ENCODE measurements at regions of chr6 and their contacts with region 1.

Region 1: GRCh38 chr6:30883685-30884520 is at the start of gene DDR1:
- DNase-seq: peak; percentile 82 to 87
- ATAC-seq: peak; percentile 57
- total RNA-seq, gene DDR1: 297 to 333 TPM

Region 2: DNA sequence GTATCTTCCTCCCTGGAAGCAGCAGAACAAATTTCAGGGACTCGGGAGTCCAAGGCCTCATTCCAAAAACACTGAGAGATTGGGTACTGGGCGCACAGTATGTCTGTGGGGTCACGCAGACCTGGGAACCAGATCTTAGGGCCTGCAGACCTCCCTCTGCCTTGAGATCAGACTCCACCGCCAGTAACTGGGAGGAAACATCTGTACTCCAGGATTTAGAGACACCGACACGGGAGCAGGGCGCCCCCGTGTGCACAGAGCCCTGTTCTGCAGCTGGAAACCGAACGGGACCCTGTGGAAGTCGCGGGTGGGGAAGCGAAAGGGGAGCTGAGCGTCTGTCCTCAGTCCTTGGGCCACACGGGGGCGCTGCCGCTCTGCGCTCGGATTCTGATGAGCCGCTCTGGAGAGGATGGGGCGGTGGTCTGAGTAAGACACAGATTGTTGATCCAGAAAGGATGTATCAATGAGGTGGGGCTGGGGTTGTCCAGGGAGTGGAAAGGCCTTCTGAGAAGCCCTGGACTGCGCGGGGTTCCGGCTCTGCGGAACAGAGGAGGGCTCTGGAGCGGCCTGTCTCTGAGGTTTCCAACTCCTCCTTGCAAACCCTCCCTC is 430.3 kb before region 1 on chr6:
- intact Hi-C with region 1: no loop called
- DNase-seq: peak; percentile 62 to 91
- ATAC-seq: peak; percentile 86

Region 3: GRCh38 chr6:30672445-30673253 is 211.3 kb before region 1 on chr6 and contains the start of gene DHX16:
- intact Hi-C with region 1: loop called in 1 of 2 experiments (anchors 10 kb)
- DNase-seq: peak; percentile 96 to 97
- ATAC-seq: peak; percentile 89
- total RNA-seq, gene DHX16: 27.8 to 34.8 TPM